ENCODE measurements at regions of chr1 and their contacts with region 1.

Region 1: GRCh38 chr1:97034651-97035050 is 313.1 kb downstream of the PTBP2 start:
- DNase-seq: no peak
- ATAC-seq: no peak
- H3K4me3 Mint-ChIP-seq: no peak overlapping the region
- H3K27ac Mint-ChIP-seq: no peak overlapping the region
- H3K4me1 Mint-ChIP-seq: no peaks in the 10 kb centered on the region
- H3K27me3 Mint-ChIP-seq: peaks cover 4% of the 10 kb centered on the region

Region 2: DNA sequence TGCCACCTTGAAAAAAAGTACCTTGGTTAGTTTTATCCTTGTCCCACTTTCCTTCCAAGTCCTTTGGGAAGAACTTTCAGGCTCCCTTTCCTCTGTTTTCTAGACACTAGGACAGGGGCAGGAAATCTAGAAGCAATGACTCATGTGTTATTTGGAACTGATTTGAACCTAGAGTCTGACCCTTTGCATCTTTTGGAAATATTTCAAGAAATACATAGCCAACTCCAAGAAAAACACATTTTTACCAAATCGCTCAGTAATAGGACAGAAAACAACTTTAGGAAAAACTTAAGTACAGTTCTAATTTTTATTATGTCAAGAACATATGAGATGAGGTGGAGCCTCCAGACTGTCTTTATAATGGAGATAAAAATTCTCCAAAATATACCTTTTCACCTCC is 20.7 kb before region 1 on chr1:
- CTCF ChIA-PET with region 1: no interaction called
- POLR2A ChIA-PET with region 1: no interaction called
- intact Hi-C with region 1: loop called in 1 of 2 experiments (anchors 2 kb)
- DNase-seq: no peak
- ATAC-seq: no peak
- H3K4me3 Mint-ChIP-seq: no peak overlapping the region
- H3K27ac Mint-ChIP-seq: no peak overlapping the region
- H3K4me1 Mint-ChIP-seq: no peaks in the 10 kb centered on the region
- H3K27me3 Mint-ChIP-seq: peaks cover 4% of the 10 kb centered on the region

Measured in activated CD4-positive, alpha-beta T cell treated with anti-CD3 and anti-CD28 coated beads for 36 hours (primary cell).